CD8-positive, alpha-beta T cell (primary cell): ENCODE measurements at regions of chr9 and their contacts with region 1.

Region 1: GRCh38 chr9:95510709-95511615 is 5.8 kb downstream of the PTCH1 start:
- DNase-seq: peak; percentile 51 to 92 (median 81)
- ATAC-seq: peak; percentile 32
- H3K4me3 ChIP-seq: peak overlapping the region; percentile 60 to 72
- H3K4me3 Mint-ChIP-seq: peak overlapping the region; percentile 93
- H3K27ac ChIP-seq: peak overlapping the region; percentile 45
- H3K27ac Mint-ChIP-seq: peak overlapping the region; percentile 79
- H3K4me1 ChIP-seq: peaks cover 26% of the 10 kb centered on the region
- H3K4me1 Mint-ChIP-seq: peaks cover 41% of the 10 kb centered on the region
- H3K27me3 ChIP-seq: no peaks in the 10 kb centered on the region
- H3K27me3 Mint-ChIP-seq: peaks cover 22% of the 10 kb centered on the region
- CTCF ChIP-seq: no peak

Region 2: GRCh38 chr9:94726495-94727191 is 784.3 kb before region 1 on chr9 and contains the start of gene AOPEP:
- CTCF ChIA-PET with region 1: no interaction called
- POLR2A ChIA-PET with region 1: no interaction called
- intact Hi-C with region 1: loop called (anchors 10 kb)
- DNase-seq: peak; percentile 98 to 100 (median 99)
- ATAC-seq: peak; percentile 95
- H3K4me3 ChIP-seq: peak within 1 kb of the TSS; percentile 88 to 92
- H3K4me3 Mint-ChIP-seq: peak within 1 kb of the TSS; percentile 99
- H3K27ac ChIP-seq: peak within 1 kb of the TSS; percentile 95 to 96
- H3K27ac Mint-ChIP-seq: peak within 1 kb of the TSS; percentile 98
- H3K4me1 ChIP-seq: peaks cover 6% of the 10 kb centered on the region
- H3K4me1 Mint-ChIP-seq: peaks cover 12% of the 10 kb centered on the region
- H3K27me3 ChIP-seq: no peaks in the 10 kb centered on the region
- H3K27me3 Mint-ChIP-seq: no peaks in the 10 kb centered on the region
- CTCF ChIP-seq: no peak
- total RNA-seq, gene AOPEP: 4.5 to 5.2 TPM

Region 3: GRCh38 chr9:95462249-95463147 is 48.5 kb before region 1 on chr9:
- CTCF ChIA-PET with region 1: no interaction called
- POLR2A ChIA-PET with region 1: interaction called, 16 read pairs
- intact Hi-C with region 1: loop called (anchors 1 to 2 kb)
- DNase-seq: peak; percentile 50 to 93 (median 67)
- ATAC-seq: peak; percentile 96
- H3K4me3 ChIP-seq: peak overlapping the region; percentile 32 to 36
- H3K4me3 Mint-ChIP-seq: peak overlapping the region; percentile 85
- H3K27ac ChIP-seq: no peak overlapping the region
- H3K27ac Mint-ChIP-seq: peak overlapping the region; percentile 84
- H3K4me1 ChIP-seq: peaks cover 25% of the 10 kb centered on the region
- H3K4me1 Mint-ChIP-seq: peaks cover 34% of the 10 kb centered on the region
- H3K27me3 ChIP-seq: no peaks in the 10 kb centered on the region
- H3K27me3 Mint-ChIP-seq: peaks cover 4% of the 10 kb centered on the region
- CTCF ChIP-seq: no peak

Region 4: GRCh38 chr9:95710446-95710845 is 199.5 kb after region 1 on chr9:
- CTCF ChIA-PET with region 1: no interaction called
- POLR2A ChIA-PET with region 1: no interaction called
- intact Hi-C with region 1: no loop called
- DNase-seq: no peak
- ATAC-seq: no peak
- H3K4me3 ChIP-seq: no peak overlapping the region
- H3K4me3 Mint-ChIP-seq: no peak overlapping the region
- H3K27ac ChIP-seq: no peak overlapping the region
- H3K27ac Mint-ChIP-seq: no peak overlapping the region
- H3K4me1 ChIP-seq: no peaks in the 10 kb centered on the region
- H3K4me1 Mint-ChIP-seq: no peaks in the 10 kb centered on the region
- H3K27me3 ChIP-seq: no peaks in the 10 kb centered on the region
- H3K27me3 Mint-ChIP-seq: no peaks in the 10 kb centered on the region
- CTCF ChIP-seq: no peak

Region 5: DNA sequence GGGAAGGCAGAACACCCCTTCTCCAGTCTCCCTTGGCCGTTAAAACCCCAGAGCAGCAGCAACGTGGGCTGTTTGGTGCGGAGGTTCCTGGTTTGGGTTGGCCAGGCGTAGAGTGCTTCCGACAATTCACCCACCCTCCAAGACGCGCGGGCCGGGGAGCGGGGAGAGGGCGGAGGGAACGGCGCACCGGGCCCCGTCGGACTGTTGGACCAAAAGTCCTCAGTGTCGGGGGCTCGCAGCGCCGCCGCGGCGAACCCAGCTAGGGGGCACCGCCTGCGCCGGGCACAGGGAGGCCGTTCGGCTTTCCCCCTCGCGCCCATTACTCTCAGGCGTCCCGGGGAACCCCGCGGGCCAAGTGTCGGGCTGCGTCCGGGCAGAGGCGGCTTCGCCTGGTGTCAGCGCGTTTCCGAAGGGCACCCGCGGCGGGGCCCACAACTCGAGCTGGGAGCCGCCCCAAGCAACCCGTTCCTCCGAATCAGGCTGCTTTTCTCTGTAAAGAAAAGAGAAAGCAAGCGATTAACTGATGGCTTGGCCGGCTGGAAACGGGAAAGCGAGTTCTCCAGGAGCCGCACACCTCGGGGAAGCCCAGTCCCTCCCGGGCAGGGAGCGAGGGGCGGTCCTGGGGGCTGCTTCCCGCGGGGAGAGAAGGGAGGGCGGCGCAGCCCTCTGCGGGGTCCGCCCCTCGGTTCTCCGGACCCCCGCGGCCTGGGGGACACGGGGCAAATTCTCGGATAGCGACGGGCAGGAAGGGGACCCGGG is 510.0 kb after region 1 on chr9:
- CTCF ChIA-PET with region 1: no interaction called
- POLR2A ChIA-PET with region 1: no interaction called
- intact Hi-C with region 1: loop called (anchors 2 to 5 kb)
- DNase-seq: peak in 7 of 9 experiments; percentile 39 to 72 (median 61)
- ATAC-seq: peak; percentile 43
- H3K4me3 ChIP-seq: peak overlapping the region; percentile 61 to 69
- H3K4me3 Mint-ChIP-seq: peak overlapping the region; percentile 90
- H3K27ac ChIP-seq: peak overlapping the region; percentile 74 to 80
- H3K27ac Mint-ChIP-seq: peak overlapping the region; percentile 89
- H3K4me1 ChIP-seq: peaks cover 54% of the 10 kb centered on the region
- H3K4me1 Mint-ChIP-seq: peaks cover 74% of the 10 kb centered on the region
- H3K27me3 ChIP-seq: no peaks in the 10 kb centered on the region
- H3K27me3 Mint-ChIP-seq: no peaks in the 10 kb centered on the region
- CTCF ChIP-seq: no peak

Region 6: DNA sequence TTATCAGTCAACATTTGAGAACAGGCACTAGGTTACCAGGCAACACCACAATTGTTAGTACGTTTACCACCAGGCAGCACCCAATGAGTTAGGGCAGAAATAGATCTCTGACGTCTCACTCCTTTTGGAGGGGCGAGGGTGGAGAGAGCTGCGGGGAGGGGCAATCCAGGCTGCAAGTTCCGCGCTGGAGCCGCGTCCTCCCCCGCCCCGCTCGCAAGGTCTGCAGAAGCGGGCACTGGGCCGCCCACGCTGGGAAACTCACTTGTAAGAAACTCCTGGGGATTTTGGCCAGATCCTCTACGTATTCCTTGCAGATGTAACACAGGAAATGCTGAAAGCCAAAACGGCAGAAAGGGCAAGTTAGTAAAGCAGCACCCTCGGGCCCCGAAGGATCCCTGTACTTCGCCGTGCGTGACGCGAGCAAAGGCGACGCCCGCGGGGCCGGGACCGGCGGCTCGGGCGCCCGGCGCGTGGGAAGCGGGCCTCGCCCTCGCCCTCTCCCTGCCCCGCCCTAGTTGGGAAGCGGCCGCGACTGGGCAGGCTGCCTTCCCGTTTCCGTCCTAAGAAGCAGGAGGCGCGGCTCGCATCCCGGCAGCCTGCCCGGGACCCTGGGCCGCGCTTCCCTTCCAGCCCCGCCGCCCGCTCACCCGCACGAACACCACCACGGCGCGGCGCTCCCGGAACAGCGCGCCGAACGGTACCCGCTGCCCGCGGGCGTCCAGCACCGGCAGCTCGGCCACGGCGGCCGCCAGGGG is 1143.7 kb after region 1 on chr9:
- CTCF ChIA-PET with region 1: no interaction called
- POLR2A ChIA-PET with region 1: no interaction called
- intact Hi-C with region 1: loop called in 1 of 2 experiments (anchors 10 kb)
- DNase-seq: peak; percentile 52 to 96 (median 77)
- ATAC-seq: peak; percentile 88
- H3K4me3 ChIP-seq: peak overlapping the region; percentile 57 to 71
- H3K4me3 Mint-ChIP-seq: peak overlapping the region; percentile 97
- H3K27ac ChIP-seq: peak overlapping the region; percentile 62 to 66
- H3K27ac Mint-ChIP-seq: peak overlapping the region; percentile 98
- H3K4me1 ChIP-seq: peaks cover 7% of the 10 kb centered on the region
- H3K4me1 Mint-ChIP-seq: peaks cover 22% of the 10 kb centered on the region
- H3K27me3 ChIP-seq: no peaks in the 10 kb centered on the region
- H3K27me3 Mint-ChIP-seq: no peaks in the 10 kb centered on the region
- CTCF ChIP-seq: no peak